ENCODE measurements at regions of chr3 and their contacts with region 1.

Region 1: GRCh38 chr3:58013973-58014649 is 5.9 kb downstream of the FLNB start:
- DNase-seq: peak in 6 of 10 donors; percentile 9 to 67 (median 51)
- H3K4me3 ChIP-seq: no peak overlapping the region
- H3K27ac ChIP-seq: peak overlapping the region in 10 of 59 donors; percentile 1 to 57 (median 25)
- H3K27me3 ChIP-seq: no peaks in the 10 kb centered on the region
- CTCF ChIP-seq: no peak

Region 2: GRCh38 chr3:58052373-58053273 is 38.5 kb after region 1 on chr3:
- intact Hi-C with region 1: loop called in 1 of 2 experiments (anchors 5 kb)
- DNase-seq: peak in 9 of 10 donors; percentile 55 to 88 (median 70)
- H3K4me3 ChIP-seq: no peak overlapping the region
- H3K27ac ChIP-seq: peak overlapping the region in 45 of 59 donors; percentile 2 to 87 (median 62)
- H3K27me3 ChIP-seq: no peaks in the 10 kb centered on the region
- CTCF ChIP-seq: no peak

Region 3: DNA sequence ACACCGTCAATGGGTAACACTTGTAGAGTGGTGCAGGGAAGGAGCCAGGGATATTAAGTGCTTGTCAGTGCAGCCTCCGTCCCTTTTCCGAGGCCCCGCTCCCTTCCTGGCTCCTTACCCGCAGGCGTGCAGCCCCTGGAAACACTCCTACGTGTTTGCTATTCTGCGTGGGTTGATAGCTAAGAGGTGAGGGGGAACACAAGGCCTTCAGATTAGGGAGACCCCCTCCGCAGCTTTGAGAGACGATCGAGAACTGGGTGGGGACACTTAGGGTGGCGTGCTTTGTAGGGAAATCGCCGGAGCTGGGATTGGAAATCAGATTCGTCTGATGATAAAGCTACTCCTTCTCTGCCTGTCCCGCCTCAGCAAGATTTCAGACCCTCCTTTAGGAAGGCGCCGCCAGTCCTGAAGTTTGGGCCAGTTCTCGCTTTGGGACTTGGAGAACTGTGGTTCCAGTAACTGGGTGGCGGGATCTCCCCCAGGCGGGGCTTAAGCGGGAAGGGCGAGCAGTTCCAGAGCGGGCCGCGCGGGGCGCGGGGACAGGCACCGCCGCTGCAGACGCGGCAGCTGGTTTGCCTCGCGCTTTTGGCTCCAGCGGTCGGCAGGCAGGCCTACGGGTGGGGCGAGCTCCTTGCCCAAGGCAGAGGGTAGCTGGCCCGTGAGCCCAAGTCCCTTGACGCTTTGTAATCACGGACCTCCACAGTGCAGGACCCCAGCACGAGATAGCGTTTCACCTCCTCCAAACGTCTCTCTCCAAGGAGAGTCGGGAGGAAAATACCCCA is 571.1 kb after region 1 on chr3:
- intact Hi-C with region 1: no loop called
- DNase-seq: peak; percentile 62 to 88 (median 76)
- H3K4me3 ChIP-seq: peak overlapping the region; percentile 41 to 88 (median 69)
- H3K27ac ChIP-seq: peak overlapping the region in 57 of 59 donors; percentile 27 to 95 (median 73)
- H3K27me3 ChIP-seq: peaks cover 0 to 4% (median 0%) of the 10 kb centered on the region in 45 donors
- CTCF ChIP-seq: peak in 54 of 56 donors; percentile 29 to 85 (median 67)